Pancreas (tissue), 10 donors: ENCODE measurements at regions of chr12 and their contacts with region 1.

Region 1: DNA sequence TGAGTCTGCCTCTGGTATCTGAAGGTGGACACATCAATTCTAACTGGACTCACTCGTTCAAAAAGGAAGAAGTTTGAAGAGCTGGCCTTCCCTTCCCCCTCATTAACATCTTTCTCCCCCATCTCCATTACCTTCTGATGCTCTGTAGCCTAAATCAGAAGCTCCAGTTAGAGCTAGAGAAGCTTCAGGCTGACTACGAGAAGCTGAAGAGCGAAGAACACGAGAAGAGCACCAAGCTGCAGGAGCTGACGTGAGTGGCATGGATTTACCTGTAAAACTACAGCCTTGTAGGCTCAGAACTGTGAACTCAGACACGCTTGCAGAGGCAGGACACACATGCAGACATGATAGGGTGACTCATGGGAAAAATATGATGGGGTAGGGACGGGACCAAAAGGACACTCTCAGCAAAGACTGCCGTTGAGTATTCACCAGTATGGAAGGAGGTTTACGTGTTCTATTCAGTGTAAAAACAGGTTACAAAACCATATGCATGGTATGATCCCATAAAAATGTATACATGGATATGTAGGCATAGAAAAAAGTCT is 14.3 kb upstream of the PIP4K2C start:
- DNase-seq: no peak
- ATAC-seq: no peak
- H3K4me3 ChIP-seq: no peak overlapping the region
- H3K27ac ChIP-seq: no peak overlapping the region
- H3K4me1 ChIP-seq: no peaks in the 10 kb centered on the region
- H3K27me3 ChIP-seq: no peaks in the 10 kb centered on the region
- CTCF ChIP-seq: no peak

Region 2: DNA sequence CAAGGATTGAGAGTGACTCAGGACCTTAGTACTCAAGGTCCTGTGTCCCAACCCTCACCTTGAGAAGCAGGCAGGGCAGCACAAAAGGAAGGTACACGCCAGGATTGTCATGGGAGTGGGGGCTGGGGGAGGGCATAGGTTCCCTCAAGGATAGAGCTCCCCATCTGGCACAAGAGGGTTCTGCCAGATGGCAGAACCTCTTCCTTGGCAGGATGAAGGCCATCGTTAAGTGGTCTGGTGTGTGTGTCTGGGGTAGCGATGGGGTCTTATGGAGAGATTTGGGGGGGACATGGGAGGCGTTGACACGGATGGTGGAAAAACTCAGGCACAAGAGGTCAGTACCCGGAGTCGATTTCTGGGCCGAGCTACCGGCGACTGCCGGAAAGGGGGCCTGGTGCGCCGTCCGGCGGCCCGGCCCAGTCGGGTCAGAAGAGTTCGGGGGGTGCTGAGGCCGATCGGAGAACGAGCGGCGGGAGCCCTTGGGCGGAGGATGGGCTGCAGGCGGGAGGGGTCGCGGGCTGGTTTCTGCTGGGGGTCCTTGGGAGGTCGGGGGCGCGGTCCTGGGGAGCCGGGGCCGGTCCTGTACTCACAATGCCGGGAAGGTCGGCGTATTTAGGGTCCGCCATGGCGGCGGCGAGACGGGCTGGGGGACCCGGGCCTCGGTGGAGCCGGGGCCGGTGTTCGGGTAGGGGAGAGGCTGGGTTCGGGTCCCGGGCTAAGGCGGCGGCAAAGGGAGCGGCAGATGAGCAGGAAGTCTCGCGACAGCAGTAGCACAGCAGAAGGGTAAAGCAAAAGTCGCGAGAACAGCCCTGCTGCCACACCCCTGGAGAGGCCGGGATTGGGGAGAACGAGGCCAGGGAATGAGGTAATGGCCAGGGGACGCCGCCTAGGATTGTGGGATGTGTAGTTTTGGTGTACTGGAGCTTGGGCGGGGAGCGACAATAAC is 30.0 kb before region 1 on chr12 and contains the start of gene DCTN2:
- intact Hi-C with region 1: no loop called
- DNase-seq: peak; percentile 86 to 98 (median 96)
- ATAC-seq: peak; percentile 96 to 98 (median 96)
- H3K4me3 ChIP-seq: peak within 1 kb of the TSS; percentile 85 to 98 (median 95)
- H3K27ac ChIP-seq: peak within 1 kb of the TSS; percentile 57 to 78 (median 76)
- H3K4me1 ChIP-seq: peaks cover 0 to 12% (median 5%) of the 10 kb centered on the region in 3 donors
- H3K27me3 ChIP-seq: no peaks in the 10 kb centered on the region
- CTCF ChIP-seq: no peak
- total RNA-seq, gene DCTN2: 54.9 to 66.2 (median 63.5) TPM

Region 3: GRCh38 chr12:57621497-57622292 is 45.0 kb after region 1 on chr12:
- intact Hi-C with region 1: loop called (anchors 2 to 10 kb)
- DNase-seq: peak in 5 of 6 donors; percentile 48 to 89 (median 73)
- ATAC-seq: peak; percentile 87 to 92 (median 92)
- H3K4me3 ChIP-seq: peak overlapping the region in 3 of 4 donors; percentile 28 to 50 (median 28)
- H3K27ac ChIP-seq: no peak overlapping the region
- H3K4me1 ChIP-seq: peaks cover 0 to 3% (median 0%) of the 10 kb centered on the region in 3 donors
- H3K27me3 ChIP-seq: peaks cover 0 to 21% (median 7%) of the 10 kb centered on the region in 4 donors
- CTCF ChIP-seq: peak; percentile 84 to 91 (median 90)

Region 4: DNA sequence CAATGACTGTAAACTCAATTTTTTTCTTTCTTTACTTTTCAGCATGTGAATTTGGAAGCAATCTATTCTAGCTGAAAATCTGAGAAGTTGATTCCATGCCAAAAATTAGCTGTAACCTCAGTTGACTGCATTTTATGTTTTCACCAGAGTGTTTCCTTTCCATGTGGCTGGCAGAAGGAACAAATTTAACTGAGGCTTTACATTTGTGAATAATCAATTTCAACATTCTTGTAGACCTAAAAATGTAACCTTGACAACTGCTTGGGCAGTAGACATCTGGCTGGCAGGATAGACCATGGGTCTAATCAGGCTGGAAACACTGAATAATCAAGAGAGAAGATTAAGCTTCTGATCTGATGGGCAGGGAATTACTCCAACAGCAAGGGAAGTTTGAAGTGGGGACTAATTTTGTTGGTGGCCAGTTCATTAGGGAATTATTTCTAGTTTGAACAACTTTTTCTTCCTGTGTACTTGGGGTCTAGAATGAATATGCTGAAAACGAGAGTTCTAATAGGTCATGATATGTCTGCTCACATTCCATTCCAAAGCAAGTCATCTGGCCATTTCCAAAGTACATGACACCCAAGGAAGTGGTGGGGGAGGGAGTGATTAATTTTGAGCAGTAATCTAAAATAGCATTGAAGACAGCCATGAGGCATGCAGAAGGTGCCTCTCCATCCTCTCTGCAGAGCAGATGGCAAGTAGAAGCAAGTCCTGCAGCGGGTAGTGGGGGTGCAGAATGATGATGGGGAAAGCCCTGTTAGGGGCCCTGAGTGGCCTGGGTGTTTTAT is 432.9 kb after region 1 on chr12:
- intact Hi-C with region 1: no loop called
- DNase-seq: no peak
- ATAC-seq: no peak
- H3K4me3 ChIP-seq: no peak overlapping the region
- H3K27ac ChIP-seq: no peak overlapping the region
- H3K4me1 ChIP-seq: no peaks in the 10 kb centered on the region
- H3K27me3 ChIP-seq: no peaks in the 10 kb centered on the region
- CTCF ChIP-seq: no peak